PC-3 (cell line): ENCODE measurements at regions of chr3 and their contacts with region 1.

Region 1: GRCh38 chr3:161274719-161275298 is 53.7 kb downstream of the NMD3 start:
- DNase-seq: peak; percentile 85
- ATAC-seq: peak; percentile 44
- H3K4me3 ChIP-seq: no peak overlapping the region
- H3K27ac ChIP-seq: peak overlapping the region; percentile 50
- H3K4me1 ChIP-seq: peaks cover 20% of the 10 kb centered on the region
- H3K27me3 ChIP-seq: no peaks in the 10 kb centered on the region
- CTCF ChIP-seq: peak; percentile 93

Region 2: DNA sequence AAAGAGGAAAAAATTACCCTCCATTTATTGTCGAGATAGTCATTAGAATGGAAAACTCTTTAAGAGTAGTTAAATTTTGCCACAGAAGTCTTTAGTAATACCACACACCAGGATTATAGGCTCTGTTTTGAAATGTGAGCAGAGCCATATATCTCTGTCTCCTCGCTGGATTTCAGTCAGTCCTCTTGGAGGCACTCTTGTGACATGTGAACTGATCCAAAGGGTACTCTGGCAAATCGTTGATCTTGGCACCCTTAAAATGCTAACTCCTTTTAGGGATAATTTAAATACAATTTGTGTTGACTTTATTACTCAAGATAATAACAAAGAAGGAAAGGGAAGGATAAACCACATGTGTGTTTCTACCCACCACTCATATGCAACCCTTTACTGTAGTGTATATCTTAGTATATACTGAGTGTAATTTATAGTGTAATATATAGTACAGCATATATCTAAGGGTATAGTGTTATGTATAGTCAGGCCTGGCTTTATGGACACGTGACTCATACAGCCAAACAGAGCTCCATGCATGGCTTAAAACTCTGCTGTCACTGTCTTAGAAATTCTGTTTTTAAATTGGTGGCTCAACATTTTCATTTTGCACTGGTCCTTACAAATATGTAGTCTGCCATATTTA is 697.1 kb before region 1 on chr3:
- CTCF ChIA-PET with region 1: no interaction called
- POLR2A ChIA-PET with region 1: no interaction called
- intact Hi-C with region 1: loop called (anchors 5 kb)
- DNase-seq: peak; percentile 85
- ATAC-seq: peak; percentile 98
- H3K4me3 ChIP-seq: no peak overlapping the region
- H3K27ac ChIP-seq: no peak overlapping the region
- H3K4me1 ChIP-seq: peaks cover 11% of the 10 kb centered on the region
- H3K27me3 ChIP-seq: no peaks in the 10 kb centered on the region
- CTCF ChIP-seq: peak; percentile 90

Region 3: GRCh38 chr3:161104561-161105551 is 170.0 kb before region 1 on chr3 and contains the start of gene B3GALNT1:
- CTCF ChIA-PET with region 1: no interaction called
- POLR2A ChIA-PET with region 1: no interaction called
- intact Hi-C with region 1: loop called (anchors 2 kb)
- DNase-seq: peak; percentile 65
- ATAC-seq: peak; percentile 72
- H3K4me3 ChIP-seq: peak within 1 kb of the TSS; percentile 89
- H3K27ac ChIP-seq: peak within 1 kb of the TSS; percentile 55
- H3K4me1 ChIP-seq: peaks cover 72% of the 10 kb centered on the region
- H3K27me3 ChIP-seq: no peaks in the 10 kb centered on the region
- CTCF ChIP-seq: no peak
- total RNA-seq, gene B3GALNT1: 110 and 125 TPM in 2 replicates

Region 4: GRCh38 chr3:161323926-161324621 is 49.3 kb after region 1 on chr3:
- CTCF ChIA-PET with region 1: interaction called, 3 read pairs
- POLR2A ChIA-PET with region 1: no interaction called
- intact Hi-C with region 1: loop called (anchors 5 kb)
- DNase-seq: peak; percentile 78
- ATAC-seq: peak; percentile 81
- H3K4me3 ChIP-seq: peak overlapping the region; percentile 1; the same call in 1 of the 2 replicates
- H3K27ac ChIP-seq: peak overlapping the region; percentile 91
- H3K4me1 ChIP-seq: peaks cover 32% of the 10 kb centered on the region
- H3K27me3 ChIP-seq: no peaks in the 10 kb centered on the region
- CTCF ChIP-seq: no peak

Region 5: GRCh38 chr3:161371430-161372326 is 96.9 kb after region 1 on chr3 and contains the start of gene SPTSSB:
- CTCF ChIA-PET with region 1: no interaction called
- POLR2A ChIA-PET with region 1: interaction called, 3 read pairs
- intact Hi-C with region 1: loop called (anchors 1 kb)
- DNase-seq: peak; percentile 96
- ATAC-seq: peak; percentile 76
- H3K4me3 ChIP-seq: peak within 1 kb of the TSS; percentile 76
- H3K27ac ChIP-seq: peak within 1 kb of the TSS; percentile 98
- H3K4me1 ChIP-seq: peaks cover 25% of the 10 kb centered on the region
- H3K27me3 ChIP-seq: no peaks in the 10 kb centered on the region
- CTCF ChIP-seq: peak; percentile 64
- total RNA-seq, gene SPTSSB: 78.0 and 144 TPM in 2 replicates